ENCODE measurements at regions of chr10 and their contacts with region 1.

Region 1: DNA sequence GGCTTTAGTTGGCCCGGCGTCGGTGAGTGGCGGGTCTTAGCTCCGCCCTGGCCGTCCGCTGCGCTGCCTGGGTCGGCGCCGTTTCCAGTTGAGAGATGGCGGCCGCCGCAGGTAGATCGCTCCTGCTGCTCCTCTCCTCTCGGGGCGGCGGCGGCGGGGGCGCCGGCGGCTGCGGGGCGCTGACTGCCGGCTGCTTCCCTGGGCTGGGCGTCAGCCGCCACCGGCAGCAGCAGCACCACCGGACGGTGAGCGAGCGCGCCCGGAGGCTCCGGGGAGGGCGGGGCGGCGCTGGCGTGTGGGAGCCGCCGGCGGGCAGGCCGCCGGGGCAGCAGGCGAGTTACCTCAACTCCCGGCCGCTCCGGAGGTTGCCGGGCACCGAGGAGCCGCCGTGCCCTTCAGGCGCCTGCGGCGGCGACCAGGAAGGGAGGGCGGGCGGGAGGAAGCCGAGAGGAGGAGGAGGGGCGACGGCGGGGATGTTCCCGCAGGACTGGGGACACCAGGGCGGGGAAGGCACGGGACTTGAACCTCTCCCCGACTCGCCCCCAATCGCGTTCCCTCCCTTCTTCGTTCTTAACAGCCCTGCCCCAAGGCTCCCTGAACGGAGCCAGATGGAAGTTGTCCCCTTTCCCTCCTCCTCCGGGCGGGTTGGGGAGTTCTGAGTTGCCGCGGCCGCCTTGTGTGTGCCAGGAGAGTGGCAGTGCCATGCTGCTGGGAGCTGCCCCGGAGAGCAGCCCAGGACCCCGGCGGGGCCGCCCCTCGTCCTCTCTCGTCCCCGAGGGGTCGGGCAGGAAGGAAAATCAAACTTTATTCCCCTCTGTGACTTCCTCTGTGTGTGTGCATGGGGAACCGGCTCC is at the start of gene MCU:
- DNase-seq: peak in 1 of 2 experiments; percentile 95
- H3K4me3 ChIP-seq: peak within 1 kb of the TSS; percentile 94
- H3K27ac ChIP-seq: peak within 1 kb of the TSS; percentile 32; the same call in 1 of the 2 replicates
- H3K4me1 ChIP-seq: peaks cover 63% of the 10 kb centered on the region
- H3K27me3 ChIP-seq: no peaks in the 10 kb centered on the region
- CTCF ChIP-seq: no peak
- total RNA-seq, gene MCU: 59.5 and 61.9 TPM in 2 replicates

Region 2: DNA sequence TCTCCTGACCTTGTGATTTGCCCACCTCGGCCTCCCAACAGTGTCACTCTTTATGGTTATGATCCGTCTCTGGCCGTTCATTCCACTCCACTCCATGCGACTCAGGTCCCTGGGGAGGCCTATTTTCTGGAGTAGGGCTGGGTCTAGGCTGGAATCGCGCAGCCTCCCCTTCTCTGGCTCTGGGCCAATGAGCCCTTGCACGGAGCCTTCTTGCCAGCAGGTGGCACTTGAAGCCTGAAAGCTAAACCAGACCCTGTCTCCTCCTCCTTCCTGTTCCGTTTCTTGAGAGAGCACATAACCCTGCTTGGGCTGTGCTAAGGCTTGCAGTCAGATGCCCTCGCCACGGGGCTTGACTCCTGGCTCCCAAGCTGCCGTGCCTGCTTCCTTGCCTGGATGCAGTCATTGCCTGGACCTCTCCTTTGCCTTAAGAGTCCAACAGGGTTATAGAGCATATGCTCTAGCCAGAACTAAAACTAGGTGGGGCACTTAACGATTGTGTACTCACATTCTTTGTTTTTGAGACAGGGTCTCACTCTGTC is 328.0 kb before region 1 on chr10:
- CTCF ChIA-PET with region 1: interaction called, 5 read pairs
- POLR2A ChIA-PET with region 1: no interaction called
- intact Hi-C with region 1: loop called (anchors 1 kb)
- DNase-seq: peak; percentile 82 to 92
- H3K4me3 ChIP-seq: no peak overlapping the region
- H3K27ac ChIP-seq: peak overlapping the region; percentile 71
- H3K4me1 ChIP-seq: peaks cover 15% of the 10 kb centered on the region
- H3K27me3 ChIP-seq: no peaks in the 10 kb centered on the region
- CTCF ChIP-seq: peak; percentile 97

Region 3: DNA sequence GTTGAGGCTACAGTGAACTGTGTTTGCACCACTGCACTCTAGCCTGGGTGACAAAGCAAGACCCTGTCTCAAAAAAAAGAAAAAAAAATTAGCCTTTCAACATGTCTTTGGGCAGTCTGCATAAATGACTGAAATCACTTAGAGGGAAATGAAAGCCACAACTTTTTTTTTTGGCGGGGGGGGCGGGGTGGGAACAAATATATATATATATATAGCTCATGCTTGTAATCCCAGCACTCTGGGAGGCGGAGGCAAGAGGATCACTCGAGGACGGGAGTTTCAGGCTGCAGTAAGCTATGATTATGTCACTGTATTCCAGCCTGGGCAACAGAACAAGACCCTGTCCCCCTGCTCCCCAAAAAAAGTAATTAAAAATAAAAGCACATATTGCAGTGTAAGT is 43.0 kb before region 1 on chr10:
- CTCF ChIA-PET with region 1: no interaction called
- POLR2A ChIA-PET with region 1: interaction called, 10 read pairs
- intact Hi-C with region 1: no loop called
- DNase-seq: no peak
- H3K4me3 ChIP-seq: no peak overlapping the region
- H3K27ac ChIP-seq: no peak overlapping the region
- H3K4me1 ChIP-seq: no peaks in the 10 kb centered on the region
- H3K27me3 ChIP-seq: no peaks in the 10 kb centered on the region
- CTCF ChIP-seq: no peak

Region 4: GRCh38 chr10:72753760-72754231 is 61.5 kb after region 1 on chr10:
- CTCF ChIA-PET with region 1: no interaction called
- POLR2A ChIA-PET with region 1: interaction called, 10 read pairs
- intact Hi-C with region 1: no loop called
- DNase-seq: no peak
- H3K4me3 ChIP-seq: no peak overlapping the region
- H3K27ac ChIP-seq: no peak overlapping the region
- H3K4me1 ChIP-seq: peaks cover 7% of the 10 kb centered on the region; the same call in 1 of the 2 replicates
- H3K27me3 ChIP-seq: no peaks in the 10 kb centered on the region
- CTCF ChIP-seq: no peak

Region 5: GRCh38 chr10:72834183-72834825 is 142.0 kb after region 1 on chr10:
- CTCF ChIA-PET with region 1: interaction called, 5 read pairs
- POLR2A ChIA-PET with region 1: no interaction called
- intact Hi-C with region 1: loop called (anchors 1 kb)
- DNase-seq: peak; percentile 49 to 62
- H3K4me3 ChIP-seq: no peak overlapping the region
- H3K27ac ChIP-seq: no peak overlapping the region
- H3K4me1 ChIP-seq: 0 out of 2 replicates have a peak, but pooled peaks cover 10% of the 10 kb centered on the region
- H3K27me3 ChIP-seq: no peaks in the 10 kb centered on the region
- CTCF ChIP-seq: peak; percentile 88

Measured in PC-9 (cell line).